ENCODE measurements at regions of chr1 and their contacts with region 1.

Region 1: DNA sequence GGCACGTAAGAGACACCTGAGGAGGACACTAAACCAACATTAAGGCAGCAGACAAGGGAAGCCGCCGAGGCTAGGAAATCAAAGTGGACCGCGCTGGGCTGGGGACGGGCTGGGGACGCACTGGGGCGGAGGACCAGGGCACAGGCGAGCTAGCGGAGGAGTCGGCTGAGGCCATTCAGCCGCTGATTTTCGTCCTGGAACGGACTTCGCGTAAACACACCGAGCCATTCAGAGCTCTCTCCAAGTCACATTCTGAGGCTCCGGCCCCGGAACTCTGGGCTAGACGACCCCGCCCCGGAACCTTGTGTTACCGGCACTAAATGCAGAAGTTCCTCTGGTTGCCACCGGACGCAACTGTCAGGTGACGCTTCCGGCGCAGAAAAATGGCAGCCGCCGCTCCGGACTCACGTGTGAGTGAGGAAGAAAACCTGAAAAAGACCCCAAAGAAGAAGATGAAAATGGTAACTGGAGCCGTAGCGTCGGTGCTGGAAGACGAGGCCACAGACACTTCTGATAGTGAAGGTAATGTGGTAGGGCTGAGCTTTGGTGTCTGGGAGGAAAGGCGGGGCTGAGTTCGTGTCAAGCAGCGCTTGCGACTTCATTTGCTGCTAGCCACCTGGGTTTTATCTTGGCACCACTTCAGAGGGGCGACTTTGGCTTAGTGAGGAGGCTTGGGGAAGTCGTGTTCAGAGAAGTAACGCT is at the start of gene RRP15:
- DNase-seq: peak; percentile 75 to 91
- H3K4me3 ChIP-seq: peak within 1 kb of the TSS; percentile 68 to 100 (median 98)
- H3K27ac ChIP-seq: peak within 1 kb of the TSS; percentile 76
- H3K4me1 ChIP-seq: peaks cover 0 to 7% (median 1%) of the 10 kb centered on the region in 4 experiments; a peak in 2 of 7 replicates
- H3K27me3 ChIP-seq: no peaks in the 10 kb centered on the region
- CTCF ChIP-seq: no peak
- EP300 ChIP-seq: no peak
- POLR2A ChIP-seq: peak in 1 of 2 experiments; percentile 88; a peak in 2 of 3 replicates
- RAD21 ChIP-seq: no peak
- total RNA-seq, gene RRP15: 46.6 and 52.8 TPM in 2 replicates

Region 2: DNA sequence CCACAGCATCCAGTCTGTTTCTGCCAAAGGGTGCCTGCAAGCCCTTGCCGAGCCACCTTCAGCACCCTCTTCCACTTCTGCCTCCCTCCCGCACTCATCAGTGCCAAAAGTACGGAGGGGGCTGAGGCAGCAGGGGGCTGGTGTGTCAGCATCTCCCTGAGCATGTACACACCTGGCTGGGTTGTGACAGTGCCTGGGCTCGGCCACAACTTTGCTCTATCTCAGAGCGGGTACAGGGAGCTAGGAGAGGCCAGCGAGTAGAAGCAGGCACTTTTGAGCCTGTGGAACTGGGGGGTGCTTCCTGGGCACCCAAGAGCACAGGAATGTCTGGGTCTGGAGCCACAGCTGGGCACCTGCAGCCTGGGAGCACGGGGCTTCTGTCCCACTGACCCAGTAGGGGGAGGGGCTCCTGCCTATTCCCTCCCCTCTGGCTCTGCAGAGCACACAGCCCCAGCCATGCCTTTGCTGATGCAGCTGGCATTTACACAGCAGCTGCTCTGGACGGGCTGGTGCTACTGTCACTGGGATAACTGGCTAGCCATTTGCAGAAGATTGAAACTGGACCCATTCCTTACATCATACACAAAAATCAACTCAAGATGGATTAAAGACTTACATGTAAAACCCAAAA is 319.8 kb before region 1 on chr1:
- CTCF ChIA-PET with region 1: no interaction called
- POLR2A ChIA-PET with region 1: no interaction called
- DNase-seq: no peak
- H3K4me3 ChIP-seq: no peak overlapping the region
- H3K27ac ChIP-seq: no peak overlapping the region
- H3K4me1 ChIP-seq: peaks cover 0 to 5% (median 0%) of the 10 kb centered on the region in 4 experiments; a peak in 2 of 7 replicates
- H3K27me3 ChIP-seq: no peaks in the 10 kb centered on the region
- CTCF ChIP-seq: no peak
- EP300 ChIP-seq: no peak
- POLR2A ChIP-seq: no peak
- RAD21 ChIP-seq: no peak

Region 3: GRCh38 chr1:218259800-218260199 is 25.3 kb before region 1 on chr1:
- CTCF ChIA-PET with region 1: interaction called, 14 read pairs
- POLR2A ChIA-PET with region 1: no interaction called
- DNase-seq: no peak
- H3K4me3 ChIP-seq: no peak overlapping the region
- H3K27ac ChIP-seq: no peak overlapping the region
- H3K4me1 ChIP-seq: no peaks in the 10 kb centered on the region
- H3K27me3 ChIP-seq: no peaks in the 10 kb centered on the region
- CTCF ChIP-seq: peak; percentile 27 to 65 (median 55)
- EP300 ChIP-seq: no peak
- POLR2A ChIP-seq: no peak
- RAD21 ChIP-seq: peak; percentile 77 to 80

Region 4: GRCh38 chr1:218299416-218299815 is 14.3 kb after region 1 on chr1:
- CTCF ChIA-PET with region 1: interaction called, 8 read pairs
- POLR2A ChIA-PET with region 1: interaction called, 19 read pairs
- DNase-seq: no peak
- H3K4me3 ChIP-seq: no peak overlapping the region
- H3K27ac ChIP-seq: no peak overlapping the region
- H3K4me1 ChIP-seq: peaks cover 3 to 31% (median 15%) of the 10 kb centered on the region in 4 experiments; a peak in 6 of 7 replicates
- H3K27me3 ChIP-seq: no peaks in the 10 kb centered on the region
- CTCF ChIP-seq: peak in 2 of 3 experiments; percentile 17 to 56; a peak in 2 of 4 replicates
- EP300 ChIP-seq: no peak
- POLR2A ChIP-seq: no peak
- RAD21 ChIP-seq: peak; percentile 59 to 65

Region 5: GRCh38 chr1:218351391-218352074 is 66.4 kb after region 1 on chr1:
- CTCF ChIA-PET with region 1: no interaction called
- POLR2A ChIA-PET with region 1: no interaction called
- DNase-seq: peak in 1 of 2 experiments; percentile 48
- H3K4me3 ChIP-seq: no peak overlapping the region
- H3K27ac ChIP-seq: no peak overlapping the region
- H3K4me1 ChIP-seq: peaks cover 0 to 2% (median 0%) of the 10 kb centered on the region in 4 experiments; a peak in 1 of 7 replicates
- H3K27me3 ChIP-seq: peaks cover 0 to 3% (median 2%) of the 10 kb centered on the region in 4 experiments; a peak in 3 of 7 replicates
- CTCF ChIP-seq: peak; percentile 46 to 67 (median 52)
- EP300 ChIP-seq: no peak
- POLR2A ChIP-seq: no peak
- RAD21 ChIP-seq: peak; percentile 48 to 54

Region 6: DNA sequence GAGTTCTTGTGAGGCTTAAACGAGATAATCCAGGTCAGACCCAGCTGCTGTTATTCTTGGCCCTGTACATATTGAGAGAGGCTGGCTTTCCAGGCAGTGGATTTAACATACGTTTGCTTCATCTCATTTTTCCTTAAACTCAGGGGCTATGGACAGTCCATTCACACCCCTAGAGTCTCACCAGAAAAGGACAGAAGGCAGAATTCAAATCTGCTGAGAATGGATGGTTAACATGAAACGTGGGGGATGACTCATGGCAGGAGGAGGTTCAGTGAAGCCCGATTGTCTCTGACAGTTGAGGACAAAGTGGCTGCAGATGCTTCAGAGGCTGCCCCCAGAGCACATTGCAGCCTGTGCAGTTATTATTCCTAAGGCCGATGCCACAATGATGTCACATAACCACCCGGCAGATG is 99.5 kb after region 1 on chr1:
- CTCF ChIA-PET with region 1: no interaction called
- POLR2A ChIA-PET with region 1: no interaction called
- DNase-seq: no peak
- H3K4me3 ChIP-seq: no peak overlapping the region
- H3K27ac ChIP-seq: no peak overlapping the region
- H3K4me1 ChIP-seq: no peaks in the 10 kb centered on the region
- H3K27me3 ChIP-seq: no peaks in the 10 kb centered on the region
- CTCF ChIP-seq: no peak
- EP300 ChIP-seq: no peak
- POLR2A ChIP-seq: no peak
- RAD21 ChIP-seq: no peak